CD8-positive, alpha-beta memory T cell (primary cell): ENCODE measurements at regions of chr5 and their contacts with region 1.

Region 1: DNA sequence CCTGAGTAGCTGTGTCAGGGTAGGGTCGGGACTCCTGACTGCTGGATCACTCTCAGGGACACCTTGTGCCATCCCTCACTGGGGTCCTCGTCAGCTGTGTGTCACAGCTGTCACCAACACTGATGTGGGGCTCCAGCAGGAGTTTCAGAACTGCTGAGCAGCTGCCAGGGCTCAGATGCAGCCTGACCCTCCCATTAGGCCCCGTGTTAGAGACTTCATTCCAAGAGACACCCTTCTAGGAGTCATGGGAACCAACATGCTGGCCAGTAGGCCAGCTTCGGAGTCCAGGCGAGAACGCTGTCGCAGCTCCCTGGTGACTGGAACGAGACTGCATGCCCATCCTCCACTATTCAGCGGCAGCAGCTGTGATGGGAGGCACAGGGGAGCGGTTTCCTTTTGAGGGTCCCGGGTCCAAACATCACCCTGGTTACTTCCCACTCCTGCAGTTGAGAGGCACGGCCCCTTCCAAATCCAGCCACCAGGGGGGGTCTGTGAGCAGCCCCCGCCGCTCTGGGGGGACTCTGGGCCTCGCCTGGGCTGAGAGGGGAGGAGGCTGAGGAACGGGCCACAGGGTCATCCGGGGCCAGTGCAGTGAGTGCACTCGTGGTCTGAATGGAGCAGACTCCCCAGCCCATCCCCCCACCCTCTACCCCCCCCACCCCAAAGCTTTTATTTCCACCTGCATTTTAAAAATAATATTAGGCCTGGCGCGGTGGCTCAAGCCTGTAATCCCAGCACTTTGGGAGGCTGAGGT is 12.6 kb upstream of the TCF7 start:
- DNase-seq: peak; percentile 64 to 86 (median 74)
- H3K4me3 ChIP-seq: peak overlapping the region; percentile 34
- H3K4me3 Mint-ChIP-seq: peak overlapping the region in 4 of 7 donors; percentile 12 to 61 (median 25)
- H3K27ac ChIP-seq: no peak overlapping the region
- H3K27ac Mint-ChIP-seq: peak overlapping the region; percentile 15 to 95 (median 71)
- H3K4me1 ChIP-seq: peaks cover 91% of the 10 kb centered on the region
- H3K4me1 Mint-ChIP-seq: peaks cover 76 to 92% (median 91%) of the 10 kb centered on the region in 3 donors
- H3K27me3 ChIP-seq: no peaks in the 10 kb centered on the region
- H3K27me3 Mint-ChIP-seq: no peaks in the 10 kb centered on the region

Region 2: DNA sequence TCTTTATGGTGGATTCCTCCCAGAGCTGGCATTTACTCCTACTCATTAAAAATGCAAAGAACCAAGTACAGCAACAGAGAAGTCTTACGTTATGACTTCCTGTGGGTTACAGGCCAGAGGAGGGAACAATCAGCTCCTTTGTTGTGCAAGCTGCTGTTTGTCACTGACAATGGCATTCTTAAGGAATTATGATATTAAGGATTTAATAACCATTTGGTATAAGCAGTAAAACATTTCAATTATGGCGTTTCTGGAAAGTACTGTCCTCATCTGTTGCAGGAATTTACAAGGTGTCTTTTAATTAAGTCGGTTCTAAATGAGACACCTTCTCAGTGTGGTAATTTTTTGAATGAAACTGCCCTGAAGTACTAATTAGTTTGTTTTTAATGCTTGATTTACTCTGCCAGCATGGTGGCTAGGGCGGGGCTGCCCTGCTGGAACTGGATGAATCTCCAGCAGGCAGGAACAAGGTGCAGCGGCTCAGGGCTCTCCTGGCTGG is 48.0 kb before region 1 on chr5:
- CTCF ChIA-PET with region 1: interaction called, 17 read pairs
- POLR2A ChIA-PET with region 1: interaction called, 4 read pairs
- DNase-seq: peak in 1 of 5 donors; percentile 35
- H3K4me3 ChIP-seq: peak overlapping the region; percentile 28
- H3K4me3 Mint-ChIP-seq: peak overlapping the region in 4 of 7 donors; percentile 24 to 76 (median 46)
- H3K27ac ChIP-seq: no peak overlapping the region
- H3K27ac Mint-ChIP-seq: peak overlapping the region in 7 of 8 donors; percentile 1 to 87 (median 76)
- H3K4me1 ChIP-seq: peaks cover 42% of the 10 kb centered on the region
- H3K4me1 Mint-ChIP-seq: peaks cover 16 to 41% (median 16%) of the 10 kb centered on the region in 3 donors
- H3K27me3 ChIP-seq: no peaks in the 10 kb centered on the region
- H3K27me3 Mint-ChIP-seq: no peaks in the 10 kb centered on the region

Region 3: DNA sequence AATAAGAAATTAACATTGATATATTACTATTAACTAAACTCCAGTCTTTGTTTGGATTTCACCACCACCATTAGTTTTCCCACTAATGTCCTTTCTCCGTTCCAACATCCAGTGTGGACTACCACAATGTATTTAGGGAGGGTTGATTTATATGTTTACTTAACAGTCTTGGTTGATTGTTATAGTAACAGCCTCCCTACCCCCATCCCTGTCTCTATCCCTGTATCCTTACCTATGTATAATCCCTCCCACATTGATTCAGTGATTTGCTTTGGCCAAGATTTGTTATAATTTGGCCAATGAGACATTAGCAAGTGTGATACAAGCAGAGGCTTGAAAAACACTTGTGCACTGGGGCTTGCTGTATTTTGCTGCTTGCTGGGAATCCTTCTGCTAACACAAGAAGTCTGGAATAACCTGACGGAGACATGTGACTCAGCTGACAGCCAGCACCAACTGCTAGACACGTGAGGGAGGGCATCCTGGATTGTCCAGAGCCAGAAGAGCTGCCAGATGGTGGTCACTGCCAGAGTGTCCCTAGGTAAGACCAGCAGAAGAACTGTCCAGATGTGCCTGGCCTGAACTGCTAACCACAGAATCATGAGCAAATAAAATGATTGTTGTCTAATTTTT is 38.6 kb before region 1 on chr5:
- CTCF ChIA-PET with region 1: interaction called, 21 read pairs
- POLR2A ChIA-PET with region 1: no interaction called
- DNase-seq: no peak
- H3K4me3 ChIP-seq: no peak overlapping the region
- H3K4me3 Mint-ChIP-seq: no peak overlapping the region
- H3K27ac ChIP-seq: no peak overlapping the region
- H3K27ac Mint-ChIP-seq: peak overlapping the region in 2 of 8 donors; percentile 13 to 16
- H3K4me1 ChIP-seq: peaks cover 2% of the 10 kb centered on the region
- H3K4me1 Mint-ChIP-seq: peaks cover 2 to 7% (median 5%) of the 10 kb centered on the region in 3 donors
- H3K27me3 ChIP-seq: no peaks in the 10 kb centered on the region
- H3K27me3 Mint-ChIP-seq: no peaks in the 10 kb centered on the region

Region 4: DNA sequence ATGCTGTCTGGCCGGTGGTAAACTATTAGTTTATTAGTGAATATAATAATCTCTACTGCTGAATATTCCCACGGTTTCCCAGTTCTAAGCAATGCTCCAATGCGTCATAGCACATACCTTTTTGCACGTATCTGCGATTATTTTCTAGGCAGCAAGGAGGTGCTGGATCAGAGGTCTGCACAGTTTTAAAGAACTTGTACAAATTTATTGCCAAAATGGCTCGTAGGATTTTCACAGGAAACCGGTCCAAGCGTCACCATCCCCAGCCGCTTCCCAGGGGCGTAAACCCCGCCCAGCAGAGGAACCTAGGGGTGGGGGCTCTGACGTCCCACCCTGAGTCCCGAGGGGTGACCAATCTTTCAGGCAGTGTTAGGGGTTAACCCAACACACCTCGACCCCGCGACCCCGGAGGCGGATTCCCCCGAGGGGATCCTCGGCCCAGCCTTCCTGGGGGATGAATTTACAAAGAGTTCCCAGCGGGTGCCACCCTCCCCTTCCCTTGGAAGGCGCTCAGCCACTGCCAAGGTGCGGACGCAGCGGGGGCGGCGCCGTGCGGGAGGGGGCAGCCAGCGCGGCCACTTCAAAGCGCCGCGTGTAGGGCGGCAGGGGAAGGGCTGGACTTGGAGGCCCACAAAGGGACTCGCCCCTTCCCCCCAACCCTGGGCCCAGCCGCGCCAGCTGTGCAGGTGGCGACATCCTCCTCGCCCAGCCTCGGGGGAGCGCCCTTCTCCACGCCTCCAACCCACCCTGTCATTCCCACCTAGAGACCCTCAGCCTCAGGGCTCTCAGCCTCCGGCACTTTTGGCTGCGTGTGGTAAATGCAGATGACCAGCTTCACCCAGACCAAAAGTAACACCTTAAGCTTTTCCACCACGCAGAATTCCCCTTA is 30.9 kb before region 1 on chr5:
- CTCF ChIA-PET with region 1: interaction called, 70 read pairs
- POLR2A ChIA-PET with region 1: interaction called, 5 read pairs
- DNase-seq: peak in 3 of 5 donors; percentile 8 to 57 (median 19)
- H3K4me3 ChIP-seq: peak overlapping the region; percentile 55
- H3K4me3 Mint-ChIP-seq: peak overlapping the region; percentile 68 to 87 (median 82)
- H3K27ac ChIP-seq: no peak overlapping the region
- H3K27ac Mint-ChIP-seq: peak overlapping the region in 5 of 8 donors; percentile 6 to 86 (median 71)
- H3K4me1 ChIP-seq: peaks cover 58% of the 10 kb centered on the region
- H3K4me1 Mint-ChIP-seq: peaks cover 34 to 66% (median 55%) of the 10 kb centered on the region in 3 donors
- H3K27me3 ChIP-seq: no peaks in the 10 kb centered on the region
- H3K27me3 Mint-ChIP-seq: peaks cover 0 to 9% of the 10 kb centered on the region in 2 donors

Region 5: DNA sequence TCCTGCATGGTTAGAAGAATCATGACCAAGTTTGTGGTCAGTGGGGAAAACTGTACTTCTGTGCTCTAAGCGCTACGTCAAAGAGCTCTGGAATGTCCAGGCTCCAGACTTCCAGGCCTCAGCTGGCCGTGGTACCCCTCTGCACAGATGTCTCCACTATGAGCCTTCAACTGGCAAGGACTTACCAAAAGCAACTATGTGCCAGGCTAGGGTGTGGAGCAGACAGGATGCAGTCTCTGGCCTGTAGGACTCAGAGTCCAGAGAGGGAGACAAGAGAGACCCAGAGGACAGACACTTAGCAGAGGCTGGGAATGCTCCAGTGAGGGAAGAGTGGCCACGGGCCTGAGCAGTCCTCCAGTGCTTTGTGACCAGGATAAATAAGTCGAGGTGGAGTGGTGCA is 18.3 kb before region 1 on chr5:
- CTCF ChIA-PET with region 1: interaction called, 70 read pairs
- POLR2A ChIA-PET with region 1: interaction called, 19 read pairs
- DNase-seq: no peak
- H3K4me3 ChIP-seq: no peak overlapping the region
- H3K4me3 Mint-ChIP-seq: peak overlapping the region in 1 of 7 donors; percentile 16
- H3K27ac ChIP-seq: no peak overlapping the region
- H3K27ac Mint-ChIP-seq: peak overlapping the region in 3 of 8 donors; percentile 36 to 79 (median 50)
- H3K4me1 ChIP-seq: peaks cover 79% of the 10 kb centered on the region
- H3K4me1 Mint-ChIP-seq: peaks cover 57 to 78% (median 73%) of the 10 kb centered on the region in 3 donors
- H3K27me3 ChIP-seq: no peaks in the 10 kb centered on the region
- H3K27me3 Mint-ChIP-seq: peaks cover 0 to 3% of the 10 kb centered on the region in 2 donors

Region 6: GRCh38 chr5:134140530-134141201 is 38.8 kb after region 1 on chr5:
- CTCF ChIA-PET with region 1: no interaction called
- POLR2A ChIA-PET with region 1: interaction called, 25 read pairs
- DNase-seq: peak in 4 of 5 donors; percentile 47 to 73 (median 58)
- H3K4me3 ChIP-seq: no peak overlapping the region
- H3K4me3 Mint-ChIP-seq: peak overlapping the region in 2 of 7 donors; percentile 24 to 59
- H3K27ac ChIP-seq: peak overlapping the region; percentile 35
- H3K27ac Mint-ChIP-seq: peak overlapping the region; percentile 86 to 100 (median 94)
- H3K4me1 ChIP-seq: peaks cover 57% of the 10 kb centered on the region
- H3K4me1 Mint-ChIP-seq: peaks cover 65 to 97% (median 86%) of the 10 kb centered on the region in 3 donors
- H3K27me3 ChIP-seq: no peaks in the 10 kb centered on the region
- H3K27me3 Mint-ChIP-seq: no peaks in the 10 kb centered on the region

Region 7: GRCh38 chr5:134145779-134146581 is 44.1 kb after region 1 on chr5:
- CTCF ChIA-PET with region 1: no interaction called
- POLR2A ChIA-PET with region 1: interaction called, 25 read pairs
- DNase-seq: peak; percentile 71 to 87 (median 76)
- H3K4me3 ChIP-seq: no peak overlapping the region
- H3K4me3 Mint-ChIP-seq: peak overlapping the region in 2 of 7 donors; percentile 26 to 57
- H3K27ac ChIP-seq: no peak overlapping the region
- H3K27ac Mint-ChIP-seq: peak overlapping the region; percentile 80 to 97 (median 90)
- H3K4me1 ChIP-seq: peaks cover 19% of the 10 kb centered on the region
- H3K4me1 Mint-ChIP-seq: peaks cover 30 to 80% (median 56%) of the 10 kb centered on the region in 3 donors
- H3K27me3 ChIP-seq: no peaks in the 10 kb centered on the region
- H3K27me3 Mint-ChIP-seq: no peaks in the 10 kb centered on the region